PC-3 (cell line): ENCODE measurements at regions of chr5 and their contacts with region 1.

Region 1: DNA sequence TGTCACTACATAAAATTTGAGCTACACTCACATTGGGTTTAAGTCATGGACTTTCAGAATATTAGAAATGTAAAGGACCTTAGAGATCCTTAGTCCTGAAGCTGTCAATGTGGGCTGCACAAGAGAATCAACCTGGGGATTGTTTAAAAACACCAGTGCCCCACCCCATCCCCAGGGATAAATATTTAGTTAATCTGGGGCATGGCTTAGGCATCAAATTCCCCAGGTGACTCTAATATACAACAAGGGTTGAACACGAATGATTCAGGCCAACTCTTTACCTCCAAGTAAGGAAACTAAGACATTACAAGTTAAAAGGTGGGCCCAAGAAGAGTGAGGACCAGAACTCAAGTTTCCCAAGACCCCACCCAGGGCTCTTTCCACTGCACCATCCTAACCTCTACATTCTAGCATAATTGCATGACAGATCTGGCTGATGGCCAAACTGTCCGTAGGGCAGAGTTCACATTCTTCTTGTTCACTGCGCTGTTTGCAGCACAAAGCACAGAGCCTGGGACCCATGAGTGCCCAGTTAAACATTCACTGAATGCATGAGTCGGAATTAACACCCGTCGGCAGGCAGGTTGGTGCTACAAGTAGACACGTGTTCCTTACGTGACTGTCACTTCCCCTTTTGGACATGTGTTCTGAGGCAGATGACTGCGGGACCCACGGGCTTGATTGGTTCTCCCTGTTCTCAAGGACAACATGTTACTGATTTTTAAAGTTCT is 25.2 kb downstream of the CYFIP2 start:
- DNase-seq: no peak
- ATAC-seq: no peak
- H3K4me3 ChIP-seq: no peak overlapping the region
- H3K27ac ChIP-seq: no peak overlapping the region
- H3K4me1 ChIP-seq: no peaks in the 10 kb centered on the region
- H3K27me3 ChIP-seq: no peaks in the 10 kb centered on the region
- CTCF ChIP-seq: no peak

Region 2: DNA sequence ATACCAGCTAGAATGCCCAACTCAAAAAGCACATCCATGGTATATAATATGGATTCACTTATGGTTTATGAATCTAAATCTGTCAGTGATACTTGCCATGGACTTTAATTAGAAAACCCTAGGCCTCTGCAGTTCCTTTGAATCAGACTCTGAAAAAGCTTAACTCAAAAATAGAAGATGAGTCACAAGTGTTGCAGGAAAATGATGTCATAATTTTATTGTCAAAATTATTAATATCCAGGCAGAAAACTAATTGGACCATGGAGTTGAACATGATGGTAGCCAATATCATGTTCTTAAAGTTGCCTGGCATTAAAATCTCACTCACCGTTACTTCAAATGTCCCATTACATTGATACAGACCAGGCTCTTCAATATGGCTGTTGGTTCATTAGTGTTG is 551.3 kb before region 1 on chr5:
- CTCF ChIA-PET with region 1: no interaction called
- POLR2A ChIA-PET with region 1: no interaction called
- intact Hi-C with region 1: loop called (anchors 5 kb)
- DNase-seq: no peak
- ATAC-seq: no peak
- H3K4me3 ChIP-seq: no peak overlapping the region
- H3K27ac ChIP-seq: no peak overlapping the region
- H3K4me1 ChIP-seq: no peaks in the 10 kb centered on the region
- H3K27me3 ChIP-seq: peaks cover 1% of the 10 kb centered on the region; the same call in 1 of the 2 replicates
- CTCF ChIP-seq: no peak

Region 3: GRCh38 chr5:156815988-156816599 is 475.1 kb before region 1 on chr5:
- CTCF ChIA-PET with region 1: no interaction called
- POLR2A ChIA-PET with region 1: no interaction called
- intact Hi-C with region 1: loop called (anchors 10 kb)
- DNase-seq: peak; percentile 63
- ATAC-seq: peak; percentile 68
- H3K4me3 ChIP-seq: no peak overlapping the region
- H3K27ac ChIP-seq: no peak overlapping the region
- H3K4me1 ChIP-seq: no peaks in the 10 kb centered on the region
- H3K27me3 ChIP-seq: no peaks in the 10 kb centered on the region
- CTCF ChIP-seq: peak; percentile 71

Region 4: DNA sequence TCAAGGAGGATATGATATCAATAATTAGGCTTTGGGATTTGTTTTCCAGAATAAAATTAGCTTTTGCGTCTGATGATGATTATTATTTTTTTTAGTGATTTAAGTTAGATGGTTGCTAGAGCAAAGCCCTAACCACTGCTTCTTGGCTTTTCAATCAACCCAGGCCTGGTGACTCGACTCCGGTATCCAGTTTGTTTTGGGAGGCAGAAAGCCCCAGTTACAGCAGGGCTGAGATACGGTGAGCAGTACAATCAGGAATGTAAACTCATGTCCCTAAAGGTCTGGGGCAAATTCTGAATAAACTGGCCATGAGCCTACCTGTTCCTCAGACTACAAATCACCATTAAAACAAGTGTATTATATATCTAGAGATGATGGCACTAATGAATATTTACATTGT is 49.7 kb before region 1 on chr5:
- CTCF ChIA-PET with region 1: no interaction called
- POLR2A ChIA-PET with region 1: no interaction called
- intact Hi-C with region 1: no loop called
- DNase-seq: no peak
- ATAC-seq: no peak
- H3K4me3 ChIP-seq: no peak overlapping the region
- H3K27ac ChIP-seq: no peak overlapping the region
- H3K4me1 ChIP-seq: peaks cover 6% of the 10 kb centered on the region; the same call in 1 of the 2 replicates
- H3K27me3 ChIP-seq: peaks cover 39% of the 10 kb centered on the region
- CTCF ChIP-seq: no peak

Region 5: GRCh38 chr5:157743163-157744050 is 452.3 kb after region 1 on chr5 and contains the start of gene LSM11:
- CTCF ChIA-PET with region 1: no interaction called
- POLR2A ChIA-PET with region 1: no interaction called
- intact Hi-C with region 1: no loop called
- DNase-seq: peak; percentile 97
- ATAC-seq: peak; percentile 88
- H3K4me3 ChIP-seq: peak within 1 kb of the TSS; percentile 89
- H3K27ac ChIP-seq: no peak within 1 kb of the TSS
- H3K4me1 ChIP-seq: peaks cover 28% of the 10 kb centered on the region
- H3K27me3 ChIP-seq: no peaks in the 10 kb centered on the region
- CTCF ChIP-seq: peak; percentile 100
- total RNA-seq, gene LSM11: 5.0 and 5.1 TPM in 2 replicates